Naive thymus-derived CD4-positive, alpha-beta T cell (primary cell): ENCODE measurements at regions of chr14 and their contacts with region 1.

Region 1: DNA sequence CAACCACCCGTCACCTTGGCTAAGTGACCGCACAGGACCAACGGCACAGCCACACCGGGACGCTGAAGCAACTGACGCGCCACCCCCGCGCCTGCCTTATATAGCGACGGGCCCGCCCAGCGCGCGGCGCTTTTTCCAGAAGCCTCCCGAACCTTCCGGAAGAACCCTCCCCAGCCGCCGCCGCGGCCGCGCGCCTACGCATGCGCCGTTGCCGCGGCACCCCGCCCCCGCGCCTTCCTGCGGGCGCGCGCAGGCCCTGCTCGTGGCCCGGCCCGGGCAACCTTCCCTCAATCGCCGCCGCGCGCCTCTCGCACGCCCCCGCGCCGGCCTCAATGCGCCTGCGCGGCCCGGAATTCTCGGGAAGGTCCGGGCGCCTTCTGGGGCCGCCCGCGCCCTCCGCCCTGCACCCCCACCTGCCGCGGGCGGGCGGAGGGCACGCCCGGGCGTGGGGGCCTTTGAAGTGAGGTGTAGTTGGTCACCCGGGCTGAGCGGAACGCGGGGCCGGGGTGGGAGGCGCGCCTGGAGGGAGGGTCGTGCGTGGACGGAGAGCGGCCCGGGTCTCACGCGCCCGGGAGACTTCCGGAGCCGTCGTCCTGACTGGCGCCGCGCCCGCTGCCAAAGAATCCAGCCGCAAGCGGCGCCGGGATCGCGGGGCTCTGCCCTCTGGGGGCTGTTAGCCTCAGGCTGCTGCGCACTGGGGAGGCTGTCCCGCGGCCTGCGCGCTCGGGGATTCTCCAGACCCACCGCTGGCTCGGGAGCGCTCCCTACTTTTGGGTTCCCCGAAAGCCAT is at the start of gene HSP90AA1:
- DNase-seq: peak; percentile 89 to 99 (median 94)
- ATAC-seq: peak; percentile 87
- H3K4me3 ChIP-seq: peak within 1 kb of the TSS; percentile 91
- H3K4me3 Mint-ChIP-seq: peak within 1 kb of the TSS; percentile 90 to 98 (median 96)
- H3K27ac ChIP-seq: peak within 1 kb of the TSS; percentile 98
- H3K27ac Mint-ChIP-seq: peak within 1 kb of the TSS; percentile 93 to 98 (median 96)
- H3K4me1 ChIP-seq: peaks cover 41 to 43% of the 10 kb centered on the region in 2 donors
- H3K4me1 Mint-ChIP-seq: peaks cover 44 to 70% (median 62%) of the 10 kb centered on the region in 7 donors
- H3K27me3 ChIP-seq: no peaks in the 10 kb centered on the region
- H3K27me3 Mint-ChIP-seq: no peaks in the 10 kb centered on the region
- total RNA-seq, gene HSP90AA1: 229 to 591 (median 361) TPM

Region 2: GRCh38 chr14:101495827-101496775 is 591.1 kb before region 1 on chr14:
- CTCF ChIA-PET with region 1: no interaction called
- POLR2A ChIA-PET with region 1: no interaction called
- intact Hi-C with region 1: no loop called
- DNase-seq: no peak
- ATAC-seq: no peak
- H3K4me3 ChIP-seq: no peak overlapping the region
- H3K4me3 Mint-ChIP-seq: no peak overlapping the region
- H3K27ac ChIP-seq: no peak overlapping the region
- H3K27ac Mint-ChIP-seq: no peak overlapping the region
- H3K4me1 ChIP-seq: no peaks in the 10 kb centered on the region
- H3K4me1 Mint-ChIP-seq: no peaks in the 10 kb centered on the region
- H3K27me3 ChIP-seq: peaks cover 0 to 4% of the 10 kb centered on the region in 2 donors
- H3K27me3 Mint-ChIP-seq: peaks cover 9 to 48% (median 24%) of the 10 kb centered on the region in 5 donors

Region 3: DNA sequence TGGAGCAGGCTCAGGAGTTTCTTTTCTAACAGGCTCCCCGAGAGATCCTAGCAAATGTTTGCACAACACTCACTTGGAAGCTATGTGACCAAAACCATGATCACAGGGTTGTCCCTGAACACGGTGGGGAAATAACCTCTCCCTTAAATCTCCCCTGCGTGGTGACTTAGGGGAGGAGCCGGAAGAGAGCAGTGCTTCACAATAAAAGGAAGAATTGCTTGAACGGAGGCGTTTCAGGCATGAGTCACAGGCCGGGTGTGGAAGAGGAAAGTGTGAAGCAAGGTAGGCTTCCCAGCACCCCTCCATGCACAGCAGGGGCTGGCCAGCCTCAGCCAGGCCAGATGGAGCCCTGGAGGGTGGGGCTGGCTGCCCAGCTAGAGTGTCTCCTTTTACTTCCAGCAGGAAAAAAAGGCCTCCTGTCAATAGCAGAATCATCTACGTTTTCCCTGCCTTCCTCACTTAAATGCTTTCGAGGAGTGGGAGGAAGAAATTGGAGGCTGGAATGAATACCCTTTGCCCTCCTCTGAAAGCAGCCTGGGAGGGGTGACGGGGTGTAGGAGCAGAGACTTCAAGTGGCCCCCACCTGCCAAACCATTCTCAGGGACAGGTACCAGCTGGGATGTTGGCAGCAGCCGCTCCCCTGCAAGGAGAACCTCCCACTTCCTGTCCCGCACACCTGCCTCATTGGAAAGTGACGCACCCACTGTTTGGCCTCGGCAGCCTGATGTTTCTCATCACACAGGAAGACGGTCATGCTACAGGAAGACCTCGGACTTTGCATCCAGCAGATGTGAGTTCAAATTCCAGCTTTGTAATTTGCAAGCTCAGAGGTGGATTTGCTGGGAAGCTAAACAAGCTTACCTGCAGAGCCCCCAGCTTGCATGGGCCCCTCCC is 355.7 kb before region 1 on chr14:
- CTCF ChIA-PET with region 1: no interaction called
- POLR2A ChIA-PET with region 1: no interaction called
- intact Hi-C with region 1: loop called in 1 of 2 experiments (anchors 2 kb)
- DNase-seq: peak; percentile 37 to 90 (median 78)
- ATAC-seq: peak; percentile 96
- H3K4me3 ChIP-seq: peak overlapping the region; percentile 53
- H3K4me3 Mint-ChIP-seq: peak overlapping the region; percentile 79 to 95 (median 84)
- H3K27ac ChIP-seq: peak overlapping the region; percentile 82
- H3K27ac Mint-ChIP-seq: peak overlapping the region; percentile 93 to 99 (median 98)
- H3K4me1 ChIP-seq: peaks cover 26 to 36% of the 10 kb centered on the region in 2 donors
- H3K4me1 Mint-ChIP-seq: peaks cover 12 to 62% (median 47%) of the 10 kb centered on the region in 7 donors
- H3K27me3 ChIP-seq: no peaks in the 10 kb centered on the region
- H3K27me3 Mint-ChIP-seq: no peaks in the 10 kb centered on the region

Region 4: DNA sequence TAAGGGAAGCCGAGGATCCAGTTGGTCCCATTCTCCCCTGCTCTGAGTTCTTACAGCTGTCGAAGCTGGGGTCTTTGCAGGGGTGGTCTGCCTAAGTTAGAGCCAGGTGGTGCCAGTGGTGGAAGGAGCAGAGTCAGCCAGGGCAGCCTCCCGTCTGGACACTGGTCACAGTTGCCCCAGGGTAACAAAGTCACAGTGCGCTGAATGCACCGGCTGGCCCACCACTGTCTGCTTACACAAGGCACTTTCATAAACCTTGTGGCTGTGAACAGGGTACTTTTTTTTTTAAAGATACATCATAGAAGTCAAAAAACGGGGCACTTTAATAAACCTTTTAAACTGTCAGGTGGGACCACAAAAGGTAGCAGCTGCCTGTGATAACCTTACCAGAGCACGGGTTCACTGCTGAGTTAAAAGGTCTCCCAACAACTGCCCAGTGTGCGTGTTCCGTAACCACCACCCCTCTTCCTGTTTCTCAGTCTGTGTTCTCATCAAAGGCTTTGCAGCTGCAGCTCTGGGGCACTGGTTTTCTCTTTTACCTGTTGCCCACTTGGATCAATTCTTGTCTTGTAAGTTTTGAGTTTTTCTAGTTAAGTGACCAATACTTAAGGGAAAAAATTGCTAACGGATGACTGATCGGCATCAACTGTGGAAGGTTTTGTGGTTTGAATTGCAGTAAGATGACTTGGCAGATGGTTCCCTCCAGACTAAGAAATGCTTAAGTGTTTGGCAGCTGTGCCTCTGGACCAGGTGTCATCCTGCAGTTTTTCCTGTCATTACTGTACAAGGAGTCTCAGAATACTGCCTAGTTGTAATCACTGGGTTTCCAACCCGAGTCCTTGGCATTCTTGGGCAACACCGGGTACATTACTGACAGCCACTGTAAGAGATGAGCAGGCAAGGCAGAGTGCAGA is 66.9 kb before region 1 on chr14:
- CTCF ChIA-PET with region 1: no interaction called
- POLR2A ChIA-PET with region 1: interaction called, 6 read pairs
- intact Hi-C with region 1: loop called in 1 of 2 experiments (anchors 2 kb)
- DNase-seq: peak in 8 of 9 donors; percentile 35 to 71 (median 60)
- ATAC-seq: peak; percentile 82
- H3K4me3 ChIP-seq: no peak overlapping the region
- H3K4me3 Mint-ChIP-seq: peak overlapping the region; percentile 9 to 81 (median 60)
- H3K27ac ChIP-seq: peak overlapping the region; percentile 51
- H3K27ac Mint-ChIP-seq: peak overlapping the region; percentile 76 to 94 (median 89)
- H3K4me1 ChIP-seq: peaks cover 0 to 14% of the 10 kb centered on the region in 2 donors
- H3K4me1 Mint-ChIP-seq: peaks cover 11 to 23% (median 15%) of the 10 kb centered on the region in 7 donors
- H3K27me3 ChIP-seq: no peaks in the 10 kb centered on the region
- H3K27me3 Mint-ChIP-seq: no peaks in the 10 kb centered on the region

Region 5: DNA sequence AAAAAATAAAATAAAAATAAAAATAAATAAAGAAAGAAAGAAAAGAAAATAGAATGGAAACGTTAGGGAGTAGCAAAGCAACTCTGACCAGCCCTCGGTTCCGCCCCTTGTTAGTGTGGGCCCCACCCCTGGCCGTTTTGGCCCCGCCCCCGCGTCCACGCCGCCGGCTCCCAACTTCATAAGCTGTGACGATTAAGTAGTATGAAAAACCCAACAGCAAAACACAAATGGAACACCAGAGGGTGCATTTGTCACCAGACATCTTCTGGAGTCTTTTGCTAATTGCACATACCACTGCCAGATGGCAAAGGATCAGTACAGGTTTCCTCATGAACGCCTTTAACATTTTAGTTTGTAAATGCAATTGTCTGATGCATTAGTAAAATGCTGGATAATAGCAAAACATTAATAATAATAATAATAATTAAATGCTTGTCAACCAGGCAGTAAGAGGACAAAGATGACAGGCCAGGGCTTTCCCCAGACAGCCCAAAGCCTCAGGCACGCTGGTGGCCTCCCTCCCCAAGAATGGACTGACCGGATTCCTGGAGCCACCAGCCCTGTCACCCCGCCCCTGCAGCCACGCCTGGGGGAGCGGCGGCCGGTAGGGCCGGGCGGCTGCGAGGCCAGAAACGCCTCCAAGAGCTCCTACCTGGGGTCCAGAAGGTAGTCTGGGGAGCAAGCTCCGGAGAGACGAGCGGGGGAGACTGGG is 23.9 kb before region 1 on chr14:
- CTCF ChIA-PET with region 1: interaction called, 4 read pairs
- POLR2A ChIA-PET with region 1: interaction called, 4 read pairs
- intact Hi-C with region 1: loop called in 1 of 2 experiments (anchors 1 kb)
- DNase-seq: peak; percentile 42 to 70 (median 57)
- ATAC-seq: peak; percentile 98
- H3K4me3 ChIP-seq: no peak overlapping the region
- H3K4me3 Mint-ChIP-seq: no peak overlapping the region
- H3K27ac ChIP-seq: no peak overlapping the region
- H3K27ac Mint-ChIP-seq: no peak overlapping the region
- H3K4me1 ChIP-seq: peaks cover 0 to 10% of the 10 kb centered on the region in 2 donors
- H3K4me1 Mint-ChIP-seq: peaks cover 0 to 8% (median under 1%) of the 10 kb centered on the region in 7 donors
- H3K27me3 ChIP-seq: no peaks in the 10 kb centered on the region
- H3K27me3 Mint-ChIP-seq: peaks cover 0 to 3% (median 0%) of the 10 kb centered on the region in 5 donors

Region 6: DNA sequence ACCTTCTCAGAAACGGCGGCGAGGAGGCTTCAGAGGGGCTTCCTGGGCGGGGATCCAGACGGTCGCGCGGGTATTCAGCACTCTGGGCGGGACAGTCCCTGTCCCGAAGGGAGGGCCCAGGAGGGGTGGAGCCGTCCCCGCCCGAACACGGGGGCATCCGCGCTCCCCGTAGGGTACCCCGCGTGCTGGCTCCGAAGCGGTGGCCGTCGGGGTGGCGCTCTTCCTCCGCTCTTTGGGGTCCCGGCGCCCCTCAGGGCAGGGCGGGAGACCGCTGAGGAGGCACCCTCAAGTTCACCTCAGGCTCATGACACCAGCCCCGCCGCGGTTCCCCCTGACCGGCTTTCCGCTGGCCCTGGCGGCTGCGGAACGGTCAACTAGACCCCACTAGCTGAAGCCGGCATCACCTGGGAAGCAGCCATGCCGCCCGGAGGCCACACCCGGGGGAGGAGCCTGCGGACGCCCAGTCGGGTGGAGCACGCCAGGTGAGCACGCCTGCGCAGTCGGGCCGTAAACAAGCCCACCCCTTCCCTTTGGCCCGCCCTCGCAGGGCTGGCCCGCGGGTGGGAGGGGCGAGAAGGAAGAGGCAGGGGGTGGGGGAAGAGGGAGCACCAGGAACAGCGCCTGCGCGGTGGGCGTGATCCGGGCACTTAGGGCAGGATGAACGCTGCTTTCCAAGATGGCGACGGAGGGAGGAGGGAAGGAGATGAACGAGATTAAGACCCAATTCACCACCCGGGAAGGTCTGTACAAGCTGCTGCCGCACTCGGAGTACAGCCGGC is 52.3 kb after region 1 on chr14 and contains the start of gene WDR20:
- CTCF ChIA-PET with region 1: no interaction called
- POLR2A ChIA-PET with region 1: no interaction called
- intact Hi-C with region 1: loop called (anchors 1 kb)
- DNase-seq: peak; percentile 98 to 100 (median 99)
- ATAC-seq: peak; percentile 98
- H3K4me3 ChIP-seq: peak within 1 kb of the TSS; percentile 80
- H3K4me3 Mint-ChIP-seq: peak within 1 kb of the TSS; percentile 96 to 99 (median 98)
- H3K27ac ChIP-seq: peak within 1 kb of the TSS; percentile 90
- H3K27ac Mint-ChIP-seq: peak within 1 kb of the TSS; percentile 95 to 99 (median 96)
- H3K4me1 ChIP-seq: peaks cover 18 to 22% of the 10 kb centered on the region in 2 donors
- H3K4me1 Mint-ChIP-seq: peaks cover 17 to 36% (median 26%) of the 10 kb centered on the region in 7 donors
- H3K27me3 ChIP-seq: no peaks in the 10 kb centered on the region
- H3K27me3 Mint-ChIP-seq: no peaks in the 10 kb centered on the region
- total RNA-seq, gene WDR20: 33.1 to 67.8 (median 47.5) TPM

Region 7: DNA sequence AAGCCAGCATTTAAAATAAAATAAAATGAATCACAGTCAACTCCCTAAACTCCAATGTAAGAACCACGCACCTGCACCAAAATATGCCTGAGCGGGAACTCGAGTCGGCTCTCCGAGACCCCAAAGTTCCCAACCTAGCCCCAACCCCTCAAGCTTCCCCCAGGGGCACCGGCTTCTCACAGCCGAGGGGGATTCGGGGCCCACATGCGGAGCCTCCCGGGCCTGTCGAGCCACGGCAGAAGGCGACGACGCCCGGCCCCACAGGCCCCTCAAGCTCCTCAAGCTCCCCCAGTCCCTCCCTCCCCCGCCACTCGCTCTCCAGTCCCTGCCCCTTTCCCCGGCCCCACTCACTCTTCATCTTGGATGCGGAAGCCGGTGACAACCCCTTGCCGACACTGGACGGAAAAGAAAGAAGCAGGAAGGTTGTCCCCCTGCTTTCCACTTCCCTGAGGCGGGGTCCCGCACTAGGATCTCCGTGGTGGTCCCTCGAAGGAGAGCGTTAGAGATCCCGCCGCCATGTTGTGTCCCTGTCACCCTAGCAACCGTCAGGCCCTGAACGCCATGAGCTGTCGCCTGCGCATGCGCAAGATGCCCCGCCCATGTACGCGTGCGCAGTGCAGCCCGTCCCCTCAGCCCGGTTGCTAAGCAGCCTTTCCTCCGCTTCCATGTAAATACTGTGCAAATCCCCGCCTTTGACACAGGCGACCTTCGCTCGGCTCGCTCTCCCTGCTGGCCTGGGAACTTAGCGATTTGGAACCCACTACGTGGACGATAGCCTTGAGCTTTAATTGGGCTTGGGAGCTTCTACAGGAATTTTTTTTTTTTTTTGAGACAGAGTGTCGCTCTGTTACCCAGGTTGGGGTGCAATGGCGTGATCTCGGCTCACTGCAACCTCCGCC is 217.7 kb after region 1 on chr14 and contains the start of gene MOK:
- CTCF ChIA-PET with region 1: no interaction called
- POLR2A ChIA-PET with region 1: interaction called, 3 read pairs
- intact Hi-C with region 1: loop called in 1 of 2 experiments (anchors 1 kb)
- DNase-seq: peak; percentile 94 to 99 (median 98)
- ATAC-seq: peak; percentile 95
- H3K4me3 ChIP-seq: peak within 1 kb of the TSS; percentile 75
- H3K4me3 Mint-ChIP-seq: peak within 1 kb of the TSS; percentile 86 to 99 (median 96)
- H3K27ac ChIP-seq: peak within 1 kb of the TSS; percentile 81
- H3K27ac Mint-ChIP-seq: peak within 1 kb of the TSS; percentile 87 to 99 (median 95)
- H3K4me1 ChIP-seq: peaks cover 0 to 2% of the 10 kb centered on the region in 2 donors
- H3K4me1 Mint-ChIP-seq: peaks cover 0 to 16% (median 13%) of the 10 kb centered on the region in 7 donors
- H3K27me3 ChIP-seq: no peaks in the 10 kb centered on the region
- H3K27me3 Mint-ChIP-seq: peaks cover 0 to 16% (median 0%) of the 10 kb centered on the region in 5 donors
- total RNA-seq, gene MOK: 1.3 to 3.5 (median 1.9) TPM

Region 8: DNA sequence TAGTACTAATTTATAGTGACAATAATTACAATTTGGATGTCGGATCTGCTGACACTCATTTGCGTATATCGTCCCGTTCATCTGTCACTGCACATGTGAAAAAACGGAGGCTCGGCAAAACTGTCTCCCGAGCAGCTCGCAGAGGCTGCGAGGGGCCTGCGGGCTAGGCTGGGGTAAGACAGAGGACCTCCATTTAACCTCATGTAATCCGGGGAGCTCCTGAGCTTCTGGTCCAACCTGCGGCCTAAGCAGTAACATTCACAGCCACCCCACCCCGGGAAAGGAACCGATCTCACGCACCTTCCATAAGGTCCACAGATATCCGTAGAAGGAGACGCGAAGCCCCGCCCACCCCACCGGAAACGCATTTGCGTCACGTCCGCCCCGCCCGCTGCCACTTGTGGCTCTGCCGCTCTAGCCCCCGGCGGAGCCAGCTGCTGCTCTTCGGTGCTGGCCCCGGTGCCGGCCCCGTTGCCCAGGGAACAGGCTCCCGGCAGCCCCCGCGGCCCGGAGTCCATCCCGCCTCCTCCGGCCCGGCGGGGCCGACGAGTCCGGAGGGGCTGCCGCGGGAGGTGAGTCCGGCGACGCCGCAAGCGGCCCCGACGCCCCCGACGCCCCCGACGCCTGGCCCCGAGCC is 275.5 kb after region 1 on chr14 and contains the starts of genes CINP and TECPR2:
- CTCF ChIA-PET with region 1: no interaction called
- POLR2A ChIA-PET with region 1: interaction called, 3 read pairs
- intact Hi-C with region 1: loop called in 1 of 2 experiments (anchors 1 kb)
- DNase-seq: peak; percentile 88 to 95 (median 92)
- ATAC-seq: peak; percentile 97
- H3K4me3 ChIP-seq: peak within 1 kb of the TSS; percentile 96
- H3K4me3 Mint-ChIP-seq: peak within 1 kb of the TSS in 6 of 10 donors; percentile 92 to 97 (median 95)
- H3K27ac ChIP-seq: peak within 1 kb of the TSS; percentile 87
- H3K27ac Mint-ChIP-seq: peak within 1 kb of the TSS; percentile 82 to 99 (median 96)
- H3K4me1 ChIP-seq: peaks cover 6 to 15% of the 10 kb centered on the region in 2 donors
- H3K4me1 Mint-ChIP-seq: peaks cover 17 to 42% (median 36%) of the 10 kb centered on the region in 7 donors
- H3K27me3 ChIP-seq: no peaks in the 10 kb centered on the region
- H3K27me3 Mint-ChIP-seq: no peaks in the 10 kb centered on the region
- total RNA-seq, gene CINP: 16.8 to 34.4 (median 31.8) TPM
- total RNA-seq, gene TECPR2: 8.7 to 12.9 (median 11.4) TPM